ENCODE measurements at regions of chr19 and their contacts with region 1.

Region 1: DNA sequence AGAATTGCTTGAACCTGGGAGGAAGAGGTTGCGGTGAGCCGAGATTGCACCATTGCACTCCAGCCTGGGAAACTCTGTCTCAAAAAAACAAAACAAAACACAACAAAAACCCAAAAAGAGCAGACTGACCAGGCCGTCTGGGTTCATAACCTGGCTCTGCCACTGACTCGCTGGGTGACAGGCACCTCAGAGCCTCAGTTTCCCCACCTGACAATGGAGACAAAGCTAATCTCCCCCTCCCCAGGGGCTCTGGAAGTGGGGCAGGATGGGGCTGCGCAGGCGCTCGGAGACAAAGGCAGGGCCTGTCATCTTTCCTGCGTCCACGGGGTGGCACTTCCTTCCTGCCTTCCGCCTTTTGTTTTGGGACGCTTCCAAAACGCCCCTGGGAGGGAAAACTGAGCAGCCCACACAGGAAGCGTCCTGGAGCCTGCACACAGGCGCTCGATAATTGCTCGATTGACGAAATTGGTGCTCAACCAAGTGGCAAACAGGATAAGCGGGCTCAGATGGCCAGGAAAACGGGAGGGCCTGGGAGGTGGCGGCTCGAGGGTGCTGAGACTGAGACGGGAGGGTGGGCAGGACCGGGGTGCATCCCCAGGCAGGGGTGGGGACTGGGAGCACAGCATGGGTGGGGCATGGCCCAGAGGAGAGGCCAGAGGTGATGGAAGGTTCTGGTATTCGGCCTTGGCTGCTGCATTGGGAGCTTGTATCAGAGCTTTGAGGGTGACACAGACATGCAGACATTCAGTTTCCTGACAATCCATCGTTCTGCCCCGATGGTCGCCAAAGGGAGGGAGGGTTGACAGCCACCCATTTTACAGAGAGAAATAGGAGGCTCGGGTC is 17.8 kb downstream of the SPC24 start:
- DNase-seq: peak; percentile 95
- H3K4me3 Mint-ChIP-seq: peak overlapping the region; percentile 66
- H3K27ac Mint-ChIP-seq: peak overlapping the region; percentile 89
- H3K4me1 Mint-ChIP-seq: peaks cover 25% of the 10 kb centered on the region
- H3K27me3 Mint-ChIP-seq: no peaks in the 10 kb centered on the region
- CTCF ChIP-seq: peak; percentile 74

Region 2: GRCh38 chr19:11078893-11079292 is 58.9 kb before region 1 on chr19:
- CTCF ChIA-PET with region 1: no interaction called
- POLR2A ChIA-PET with region 1: no interaction called
- intact Hi-C with region 1: no loop called
- DNase-seq: no peak
- H3K4me3 Mint-ChIP-seq: no peak overlapping the region
- H3K27ac Mint-ChIP-seq: no peak overlapping the region
- H3K4me1 Mint-ChIP-seq: peaks cover 10% of the 10 kb centered on the region
- H3K27me3 Mint-ChIP-seq: no peaks in the 10 kb centered on the region
- CTCF ChIP-seq: no peak

Region 3: DNA sequence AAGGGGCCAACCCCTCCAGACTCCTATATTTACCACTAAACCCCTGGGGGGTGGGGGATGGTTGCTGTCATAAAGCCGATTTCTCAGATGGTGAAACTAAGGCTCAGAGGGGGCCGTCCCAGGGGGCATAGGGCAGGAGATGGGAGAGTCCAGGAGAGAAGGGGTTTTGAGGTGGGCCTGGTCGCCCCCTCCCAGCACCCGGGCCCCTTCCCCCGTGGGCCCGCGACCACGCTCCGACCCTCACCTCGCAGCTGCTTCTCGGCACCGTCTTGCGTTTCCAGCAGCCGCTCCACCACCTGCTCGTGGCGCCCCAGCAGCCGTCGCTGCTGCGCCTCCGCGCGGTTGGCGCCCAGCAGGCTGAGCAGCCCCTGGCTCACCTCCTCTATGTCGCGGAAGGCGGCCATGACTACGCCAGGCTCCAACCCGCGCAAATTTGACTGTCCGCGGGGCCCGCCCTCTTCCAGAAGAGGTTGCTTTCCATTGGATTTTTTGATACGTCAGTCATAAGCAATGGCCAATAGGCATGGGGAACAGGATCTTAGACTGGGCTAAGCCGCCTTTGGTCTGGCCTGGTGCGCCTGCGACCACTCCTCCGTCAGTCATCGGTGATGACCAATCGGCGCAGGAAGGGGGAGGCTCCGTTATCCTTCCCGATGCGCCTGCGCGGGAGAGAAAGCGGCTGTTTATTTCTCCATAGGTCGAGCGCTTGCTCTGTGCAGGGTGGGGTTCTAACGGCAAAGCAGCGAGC is 17.8 kb after region 1 on chr19 and contains the start of gene SPC24:
- CTCF ChIA-PET with region 1: interaction called, 9 read pairs
- POLR2A ChIA-PET with region 1: interaction called, 35 read pairs
- intact Hi-C with region 1: loop called (anchors 2 kb)
- DNase-seq: peak; percentile 99
- H3K4me3 Mint-ChIP-seq: peak within 1 kb of the TSS; percentile 77
- H3K27ac Mint-ChIP-seq: peak within 1 kb of the TSS; percentile 44
- H3K4me1 Mint-ChIP-seq: peaks cover 22% of the 10 kb centered on the region
- H3K27me3 Mint-ChIP-seq: no peaks in the 10 kb centered on the region
- CTCF ChIP-seq: no peak
- total RNA-seq, gene SPC24: 8.6 and 16.4 TPM in 2 replicates

Region 4: GRCh38 chr19:11191273-11191755 is 53.6 kb after region 1 on chr19:
- CTCF ChIA-PET with region 1: interaction called, 14 read pairs
- POLR2A ChIA-PET with region 1: interaction called, 10 read pairs
- intact Hi-C with region 1: no loop called
- DNase-seq: peak; percentile 54
- H3K4me3 Mint-ChIP-seq: no peak overlapping the region
- H3K27ac Mint-ChIP-seq: no peak overlapping the region
- H3K4me1 Mint-ChIP-seq: peaks cover 13% of the 10 kb centered on the region
- H3K27me3 Mint-ChIP-seq: no peaks in the 10 kb centered on the region
- CTCF ChIP-seq: no peak

Region 5: DNA sequence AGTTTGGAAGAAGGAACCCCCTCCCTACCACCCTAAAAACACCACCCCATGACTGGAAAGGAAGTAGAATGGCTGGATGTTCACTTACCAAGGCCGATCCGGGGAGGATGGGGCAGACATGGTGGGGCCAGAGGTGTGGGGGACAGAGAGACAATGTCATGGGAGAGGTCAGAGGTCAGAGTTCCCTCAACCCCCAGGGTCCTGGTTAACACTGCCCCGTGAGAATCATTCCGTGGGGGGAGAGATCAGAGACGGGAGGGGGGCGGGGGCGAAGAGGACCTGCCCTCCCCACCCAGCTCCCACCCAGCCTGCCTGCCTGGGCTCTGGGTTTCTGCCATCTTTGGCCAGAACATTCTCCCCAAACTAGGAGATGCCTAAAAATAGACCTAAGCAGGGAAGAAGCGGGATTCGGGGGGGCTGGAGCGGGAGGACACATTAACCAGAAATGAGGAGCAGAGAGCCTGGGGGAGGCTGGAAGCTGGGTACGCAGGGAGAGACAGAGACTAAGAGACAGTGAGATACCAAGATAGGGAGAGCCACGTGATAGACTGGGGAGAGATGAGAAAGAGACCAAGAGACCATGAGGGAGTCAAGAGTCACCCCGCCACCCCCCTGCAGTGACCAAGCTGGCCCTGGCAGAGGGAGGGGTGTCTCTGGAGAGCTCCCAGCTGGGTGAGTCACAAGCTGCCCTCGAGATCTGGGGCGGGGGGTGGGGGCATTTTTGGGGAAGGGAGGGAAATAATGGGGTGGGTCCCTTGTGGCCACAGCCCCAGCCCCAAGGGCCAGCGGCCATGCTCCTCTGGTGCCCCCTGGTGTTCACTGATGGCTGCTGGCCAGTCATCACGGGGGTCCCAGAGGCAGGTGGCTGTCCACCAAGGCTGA is 65.7 kb after region 1 on chr19:
- CTCF ChIA-PET with region 1: interaction called, 41 read pairs
- POLR2A ChIA-PET with region 1: interaction called, 15 read pairs
- intact Hi-C with region 1: loop called (anchors 1 kb)
- DNase-seq: peak; percentile 78
- H3K4me3 Mint-ChIP-seq: peak overlapping the region; percentile 17
- H3K27ac Mint-ChIP-seq: peak overlapping the region; percentile 47
- H3K4me1 Mint-ChIP-seq: peaks cover 25% of the 10 kb centered on the region
- H3K27me3 Mint-ChIP-seq: no peaks in the 10 kb centered on the region
- CTCF ChIP-seq: peak; percentile 91

Region 6: GRCh38 chr19:11374433-11375142 is 236.8 kb after region 1 on chr19 and contains the start of gene SWSAP1:
- CTCF ChIA-PET with region 1: interaction called, 6 read pairs
- POLR2A ChIA-PET with region 1: interaction called, 10 read pairs
- intact Hi-C with region 1: no loop called
- DNase-seq: peak; percentile 100
- H3K4me3 Mint-ChIP-seq: no peak within 1 kb of the TSS
- H3K27ac Mint-ChIP-seq: no peak within 1 kb of the TSS
- H3K4me1 Mint-ChIP-seq: peaks cover 18% of the 10 kb centered on the region
- H3K27me3 Mint-ChIP-seq: no peaks in the 10 kb centered on the region
- CTCF ChIP-seq: no peak
- total RNA-seq, gene SWSAP1: 1.0 and 1.4 TPM in 2 replicates

Region 7: GRCh38 chr19:11587302-11587974 is 449.7 kb after region 1 on chr19:
- CTCF ChIA-PET with region 1: interaction called, 4 read pairs
- POLR2A ChIA-PET with region 1: no interaction called
- intact Hi-C with region 1: loop called (anchors 5 kb)
- DNase-seq: peak; percentile 65
- H3K4me3 Mint-ChIP-seq: no peak overlapping the region
- H3K27ac Mint-ChIP-seq: no peak overlapping the region
- H3K4me1 Mint-ChIP-seq: peaks cover 13% of the 10 kb centered on the region
- H3K27me3 Mint-ChIP-seq: no peaks in the 10 kb centered on the region
- CTCF ChIP-seq: peak; percentile 94

Measured in MCF 10A (cell line).